Mammary epithelial cell (primary cell): ENCODE measurements at regions of chr20 and their contacts with region 1.

Region 1: GRCh38 chr20:3470627-3471396 is at the start of gene ATRN:
- DNase-seq: peak; percentile 87
- H3K4me3 ChIP-seq: peak within 1 kb of the TSS; percentile 75 to 99 (median 89)
- H3K27ac ChIP-seq: peak within 1 kb of the TSS; percentile 88
- H3K4me1 ChIP-seq: peaks cover 10% of the 10 kb centered on the region
- H3K27me3 ChIP-seq: no peaks in the 10 kb centered on the region
- CTCF ChIP-seq: no peak
- total RNA-seq, gene ATRN: 54.2 to 134 TPM

Region 2: DNA sequence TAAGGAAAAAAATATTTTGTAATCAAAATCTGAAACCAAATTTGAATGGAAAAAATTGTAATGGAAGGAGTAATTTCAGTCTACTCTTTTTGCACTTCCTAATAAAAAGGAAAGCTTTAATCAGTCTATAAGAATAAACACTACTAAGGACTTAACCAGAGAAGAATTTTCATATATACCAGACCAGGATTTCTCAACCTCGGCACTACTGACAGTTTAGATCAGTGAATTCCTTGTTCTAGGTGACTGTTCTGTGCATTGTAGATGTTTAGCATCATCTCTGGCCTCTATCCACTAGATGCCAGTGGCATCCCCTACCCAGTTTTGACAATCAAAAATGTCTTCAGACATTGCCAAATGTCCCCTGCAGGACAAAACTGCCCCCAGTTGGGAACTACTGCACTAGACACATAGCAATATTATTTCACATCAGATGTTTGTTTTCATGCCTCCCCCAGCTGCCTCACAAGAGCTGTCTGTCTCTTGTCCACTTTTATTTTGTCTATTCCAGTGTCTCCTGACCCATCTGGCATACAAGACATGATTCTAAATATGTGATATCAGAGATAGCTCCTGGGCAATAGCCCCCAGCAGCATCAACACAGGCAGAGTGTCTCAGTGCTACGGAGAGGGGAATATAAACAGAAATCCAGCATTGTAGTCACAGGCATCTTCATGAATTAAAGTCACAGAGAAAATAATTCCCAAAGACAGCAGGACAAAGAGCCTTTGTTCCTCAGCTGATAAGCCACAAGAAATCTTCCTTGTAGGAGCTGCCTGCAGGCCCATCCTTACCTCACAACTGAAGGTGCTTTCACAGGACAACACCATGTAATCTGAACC is 90.4 kb before region 1 on chr20:
- CTCF ChIA-PET with region 1: no interaction called
- dilution Hi-C with region 1: loop called (anchors 5 kb)
- in situ Hi-C with region 1: no loop called
- intact Hi-C with region 1: no loop called
- DNase-seq: no peak
- H3K4me3 ChIP-seq: no peak overlapping the region
- H3K27ac ChIP-seq: no peak overlapping the region
- H3K4me1 ChIP-seq: no peaks in the 10 kb centered on the region
- H3K27me3 ChIP-seq: no peaks in the 10 kb centered on the region
- CTCF ChIP-seq: no peak

Region 3: GRCh38 chr20:3407771-3408637 is 62.8 kb before region 1 on chr20:
- CTCF ChIA-PET with region 1: no interaction called
- dilution Hi-C with region 1: no loop called
- in situ Hi-C with region 1: loop called in 1 of 2 experiments (anchors 10 kb)
- intact Hi-C with region 1: loop called (anchors 1 kb)
- DNase-seq: peak; percentile 90
- H3K4me3 ChIP-seq: peak overlapping the region; percentile 70 to 87 (median 72)
- H3K27ac ChIP-seq: peak overlapping the region; percentile 52
- H3K4me1 ChIP-seq: peaks cover 18% of the 10 kb centered on the region
- H3K27me3 ChIP-seq: no peaks in the 10 kb centered on the region
- CTCF ChIP-seq: no peak

Region 4: DNA sequence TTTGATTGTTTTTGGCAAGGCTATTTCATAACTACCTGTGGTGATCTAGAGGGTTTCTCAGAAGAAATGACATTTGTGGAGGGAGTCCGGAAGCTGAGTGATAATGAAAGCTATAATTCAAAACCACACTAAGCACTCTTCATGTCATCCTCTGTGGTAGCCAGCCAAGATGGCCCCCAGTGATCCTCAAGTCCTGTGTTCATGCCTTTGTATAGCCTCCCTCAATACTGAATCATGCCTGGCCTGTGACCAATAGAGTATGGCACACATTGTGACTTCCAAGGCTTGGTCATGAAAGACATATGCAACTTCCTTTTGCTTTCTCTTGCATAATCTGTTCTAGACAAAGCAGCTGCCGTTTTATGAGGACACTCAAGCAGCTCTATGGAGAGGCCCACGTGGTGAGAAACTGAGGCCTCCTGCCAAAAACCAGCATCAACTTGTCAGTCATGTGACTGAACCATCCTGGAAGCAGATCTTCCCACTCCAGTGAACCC is 50.6 kb before region 1 on chr20:
- CTCF ChIA-PET with region 1: no interaction called
- dilution Hi-C with region 1: loop called (anchors 5 kb)
- in situ Hi-C with region 1: no loop called
- intact Hi-C with region 1: loop called (anchors 5 kb)
- DNase-seq: peak; percentile 93
- H3K4me3 ChIP-seq: no peak overlapping the region
- H3K27ac ChIP-seq: peak overlapping the region; percentile 63
- H3K4me1 ChIP-seq: peaks cover 11% of the 10 kb centered on the region
- H3K27me3 ChIP-seq: no peaks in the 10 kb centered on the region
- CTCF ChIP-seq: no peak

Region 5: GRCh38 chr20:3543901-3544507 is 73.2 kb after region 1 on chr20:
- CTCF ChIA-PET with region 1: no interaction called
- dilution Hi-C with region 1: no loop called
- in situ Hi-C with region 1: no loop called
- intact Hi-C with region 1: loop called (anchors 2 kb)
- DNase-seq: peak; percentile 99
- H3K4me3 ChIP-seq: no peak overlapping the region
- H3K27ac ChIP-seq: peak overlapping the region; percentile 94
- H3K4me1 ChIP-seq: peaks cover 49% of the 10 kb centered on the region
- H3K27me3 ChIP-seq: no peaks in the 10 kb centered on the region
- CTCF ChIP-seq: no peak

Region 6: DNA sequence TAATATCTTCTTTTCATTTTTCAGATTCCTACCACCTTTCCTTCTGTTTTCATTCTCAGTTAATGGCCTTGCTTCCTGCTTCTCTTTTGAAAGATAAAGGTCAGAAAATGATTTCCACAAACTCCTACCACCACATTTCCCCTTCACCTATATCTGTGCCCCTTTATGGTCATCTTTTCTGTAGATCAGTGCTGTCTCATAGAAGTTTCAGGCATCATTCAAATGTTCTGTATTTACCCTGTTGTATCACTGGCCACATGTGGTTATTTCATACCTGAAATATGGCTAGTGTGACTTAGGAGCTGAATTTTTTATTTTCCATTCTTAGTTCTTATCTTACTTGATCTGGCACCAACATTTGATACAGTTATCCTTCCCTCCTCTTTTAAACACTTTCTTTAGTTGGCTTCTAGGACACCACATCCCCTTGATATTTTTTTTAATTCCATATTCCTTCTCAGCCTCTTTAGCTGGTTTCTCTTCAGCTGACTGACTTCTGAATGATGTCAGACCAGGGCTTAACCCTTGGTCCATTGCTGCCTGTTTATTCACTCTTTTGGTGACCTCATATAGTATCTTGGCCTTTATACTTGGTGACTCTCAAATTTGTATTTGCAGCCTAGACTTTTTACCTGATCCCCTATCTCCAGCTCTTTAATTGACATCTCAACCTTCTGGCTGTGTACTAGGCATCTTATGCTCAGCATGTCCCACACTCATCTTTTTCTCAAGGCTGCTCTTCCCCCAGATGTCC is 81.0 kb after region 1 on chr20:
- CTCF ChIA-PET with region 1: interaction called, 29 read pairs
- dilution Hi-C with region 1: no loop called
- in situ Hi-C with region 1: no loop called
- intact Hi-C with region 1: no loop called
- DNase-seq: no peak
- H3K4me3 ChIP-seq: no peak overlapping the region
- H3K27ac ChIP-seq: no peak overlapping the region
- H3K4me1 ChIP-seq: peaks cover 8% of the 10 kb centered on the region
- H3K27me3 ChIP-seq: no peaks in the 10 kb centered on the region
- CTCF ChIP-seq: no peak

Region 7: GRCh38 chr20:3563548-3564177 is 92.9 kb after region 1 on chr20:
- CTCF ChIA-PET with region 1: no interaction called
- dilution Hi-C with region 1: no loop called
- in situ Hi-C with region 1: no loop called
- intact Hi-C with region 1: loop called (anchors 1 kb)
- DNase-seq: peak; percentile 39
- H3K4me3 ChIP-seq: no peak overlapping the region
- H3K27ac ChIP-seq: no peak overlapping the region
- H3K4me1 ChIP-seq: peaks cover 5% of the 10 kb centered on the region
- H3K27me3 ChIP-seq: no peaks in the 10 kb centered on the region
- CTCF ChIP-seq: peak; percentile 76 to 80

Region 8: DNA sequence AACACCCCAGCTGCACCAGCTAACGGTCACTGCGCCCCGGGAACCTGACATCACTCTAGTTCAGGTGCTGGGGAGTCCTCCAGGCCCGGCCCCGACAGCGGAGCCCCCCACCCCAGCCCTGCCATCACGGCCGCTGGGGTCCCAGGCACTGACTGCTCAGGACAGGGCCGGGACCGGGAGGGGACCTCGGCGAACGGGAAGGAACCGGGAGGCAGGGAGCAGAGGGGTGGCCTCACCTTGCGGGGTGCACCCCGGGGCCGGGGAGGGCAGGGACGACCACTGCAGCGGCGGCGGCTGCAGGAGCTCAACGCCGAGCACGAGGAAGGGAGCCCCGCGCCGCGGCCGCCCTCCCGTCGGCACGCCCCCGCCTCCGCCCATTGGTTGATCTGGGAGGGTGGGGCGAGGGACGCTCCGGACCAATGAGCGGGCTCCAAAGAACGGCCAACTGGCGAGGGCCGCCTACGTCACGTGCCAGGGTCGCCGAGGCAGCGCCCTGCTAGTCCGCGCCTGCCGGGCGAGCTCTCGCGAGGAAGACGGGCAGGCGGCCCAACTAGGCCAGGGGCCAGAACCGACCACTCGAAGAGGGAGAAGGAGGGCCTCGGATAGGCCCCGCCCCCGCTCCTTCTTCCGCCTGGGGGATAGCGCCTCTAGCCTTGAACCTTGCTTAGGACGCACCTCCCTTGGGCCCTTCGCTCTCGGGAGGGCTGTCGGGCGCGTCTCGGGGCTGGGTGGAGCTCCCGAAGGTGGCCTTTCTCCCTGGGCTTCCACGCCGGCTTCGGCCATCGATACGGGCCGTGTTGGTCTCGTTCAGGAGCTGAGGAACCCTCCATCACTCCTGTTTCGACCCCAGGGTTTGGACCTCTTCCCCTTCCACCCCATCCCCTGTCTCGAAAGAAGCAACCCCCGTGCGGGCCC is 296.9 kb after region 1 on chr20 and contains the start of gene ADISSP:
- CTCF ChIA-PET with region 1: no interaction called
- dilution Hi-C with region 1: no loop called
- in situ Hi-C with region 1: no loop called
- intact Hi-C with region 1: no loop called
- DNase-seq: peak; percentile 98
- H3K4me3 ChIP-seq: peak within 1 kb of the TSS; percentile 59 to 95 (median 77)
- H3K27ac ChIP-seq: peak within 1 kb of the TSS; percentile 79
- H3K4me1 ChIP-seq: peaks cover 19% of the 10 kb centered on the region
- H3K27me3 ChIP-seq: no peaks in the 10 kb centered on the region
- CTCF ChIP-seq: no peak
- total RNA-seq, gene ADISSP: 14.0 to 59.9 TPM